AG04449 (cell line): ENCODE measurements at regions of chr2 and their contacts with region 1.

Region 1: GRCh38 chr2:47174733-47175361 is 19.7 kb upstream of the STPG4 start:
- DNase-seq: no peak
- H3K4me3 ChIP-seq: peak overlapping the region; percentile 95
- CTCF ChIP-seq: no peak

Region 2: GRCh38 chr2:47016172-47016913 is 158.5 kb before region 1 on chr2:
- CTCF ChIA-PET with region 1: interaction called, 10 read pairs
- POLR2A ChIA-PET with region 1: no interaction called
- DNase-seq: peak; percentile 91
- H3K4me3 ChIP-seq: no peak overlapping the region
- CTCF ChIP-seq: peak; percentile 54